Breast epithelium (tissue), 4 donors: ENCODE measurements at regions of chr4 and their contacts with region 1.

Region 1: GRCh38 chr4:118905566-118905965 is 16.9 kb downstream of the SYNPO2 start:
- DNase-seq: no peak
- H3K4me3 ChIP-seq: no peak overlapping the region
- H3K27ac ChIP-seq: peak overlapping the region; percentile 77 to 78
- H3K4me1 ChIP-seq: peaks cover 2 to 11% of the 10 kb centered on the region in 2 donors
- H3K27me3 ChIP-seq: no peaks in the 10 kb centered on the region
- CTCF ChIP-seq: no peak
- POLR2A ChIP-seq: no peak

Region 2: GRCh38 chr4:118557298-118557851 is 348.2 kb before region 1 on chr4:
- intact Hi-C with region 1: no loop called
- DNase-seq: peak in 1 of 2 donors; percentile 77
- H3K4me3 ChIP-seq: no peak overlapping the region
- H3K27ac ChIP-seq: peak overlapping the region; percentile 57 to 63
- H3K4me1 ChIP-seq: no peaks in the 10 kb centered on the region
- H3K27me3 ChIP-seq: no peaks in the 10 kb centered on the region
- CTCF ChIP-seq: no peak
- POLR2A ChIP-seq: no peak

Region 3: DNA sequence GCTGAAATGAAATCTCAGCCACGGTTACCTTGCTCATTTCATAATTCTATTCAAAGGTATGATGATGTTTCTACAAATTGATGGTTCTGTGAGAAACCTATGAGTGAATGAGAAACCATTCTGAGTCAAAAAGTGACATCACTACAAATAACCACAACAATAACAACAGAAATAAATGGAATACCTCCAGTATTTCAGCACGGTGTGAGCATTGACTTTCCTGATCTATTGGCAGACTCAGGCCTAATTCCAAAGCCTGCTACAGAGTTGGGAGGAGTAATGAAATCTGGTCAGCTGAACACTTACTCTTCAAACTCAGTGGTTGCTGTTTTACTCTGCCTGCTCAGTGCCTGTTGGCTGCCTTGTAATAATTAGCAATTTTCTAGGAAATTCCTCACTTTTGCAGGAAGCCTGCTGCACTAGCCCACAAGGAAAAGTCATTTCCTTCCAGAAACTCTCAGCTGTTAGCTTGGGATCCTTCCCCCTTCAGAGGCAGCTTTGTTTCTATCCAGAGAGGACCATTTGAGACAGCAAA is 35.7 kb before region 1 on chr4:
- intact Hi-C with region 1: loop called (anchors 2 kb)
- DNase-seq: no peak
- H3K4me3 ChIP-seq: no peak overlapping the region
- H3K27ac ChIP-seq: peak overlapping the region in 1 of 2 donors; percentile 44
- H3K4me1 ChIP-seq: no peaks in the 10 kb centered on the region
- H3K27me3 ChIP-seq: no peaks in the 10 kb centered on the region
- CTCF ChIP-seq: no peak
- POLR2A ChIP-seq: no peak